Activated B cell treated with CpG ODN at 0.5 μM for 24 hours (primary cell): ENCODE measurements at regions of chr10 and their contacts with region 1.

Region 1: GRCh38 chr10:11684717-11685645 is 57.2 kb upstream of the ECHDC3 start:
- DNase-seq: peak; percentile 69
- ATAC-seq: peak; percentile 76
- H3K4me3 Mint-ChIP-seq: peak overlapping the region; percentile 90
- H3K27ac Mint-ChIP-seq: peak overlapping the region; percentile 100
- H3K4me1 Mint-ChIP-seq: peaks cover 91% of the 10 kb centered on the region
- H3K27me3 Mint-ChIP-seq: no peaks in the 10 kb centered on the region
- CTCF ChIP-seq: no peak

Region 2: GRCh38 chr10:11625019-11625735 is 59.8 kb before region 1 on chr10:
- CTCF ChIA-PET with region 1: no interaction called
- POLR2A ChIA-PET with region 1: interaction called, 10 read pairs
- intact Hi-C with region 1: loop called (anchors 2 kb)
- DNase-seq: peak; percentile 50
- ATAC-seq: peak; percentile 91
- H3K4me3 Mint-ChIP-seq: peak overlapping the region; percentile 70
- H3K27ac Mint-ChIP-seq: peak overlapping the region; percentile 86
- H3K4me1 Mint-ChIP-seq: peaks cover 46% of the 10 kb centered on the region
- H3K27me3 Mint-ChIP-seq: no peaks in the 10 kb centered on the region
- CTCF ChIP-seq: no peak

Region 3: DNA sequence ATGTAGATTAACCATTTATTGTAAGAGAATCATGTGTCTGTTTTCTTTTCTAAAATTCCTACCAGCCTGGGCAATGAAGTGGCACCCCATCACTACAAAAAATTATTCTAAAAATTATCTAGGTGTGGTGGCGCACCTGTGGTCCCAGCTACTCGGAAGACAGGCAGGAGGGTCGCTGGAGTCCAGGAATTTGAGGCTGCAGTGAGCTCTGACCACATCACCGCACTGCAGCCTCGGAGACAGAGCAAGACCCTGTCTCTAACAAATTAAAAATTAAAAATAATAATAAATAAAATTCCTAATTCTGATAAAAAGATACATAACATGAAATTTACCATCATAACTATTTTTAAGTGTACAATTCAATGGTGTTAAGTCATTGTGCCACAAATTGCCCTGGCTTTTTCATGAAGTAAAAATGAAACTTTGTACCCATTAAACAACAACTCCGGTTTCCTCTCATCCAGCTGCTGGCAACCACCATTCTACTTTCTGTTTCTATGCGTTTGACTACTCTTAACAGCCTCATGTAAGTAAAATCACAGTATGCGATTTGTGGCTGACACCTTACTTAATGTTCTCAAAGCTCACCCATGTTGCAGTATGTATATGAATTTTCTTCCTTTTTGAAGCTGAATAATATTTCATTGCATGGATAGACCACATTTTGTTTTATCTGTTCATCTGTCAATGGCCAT is 52.9 kb before region 1 on chr10:
- CTCF ChIA-PET with region 1: no interaction called
- POLR2A ChIA-PET with region 1: interaction called, 10 read pairs
- intact Hi-C with region 1: loop called (anchors 1 kb)
- DNase-seq: no peak
- ATAC-seq: peak; percentile 97
- H3K4me3 Mint-ChIP-seq: peak overlapping the region; percentile 65
- H3K27ac Mint-ChIP-seq: peak overlapping the region; percentile 95
- H3K4me1 Mint-ChIP-seq: peaks cover 52% of the 10 kb centered on the region
- H3K27me3 Mint-ChIP-seq: no peaks in the 10 kb centered on the region
- CTCF ChIP-seq: no peak

Region 4: GRCh38 chr10:11698691-11699549 is 13.9 kb after region 1 on chr10:
- CTCF ChIA-PET with region 1: interaction called, 4 read pairs
- POLR2A ChIA-PET with region 1: interaction called, 43 read pairs
- intact Hi-C with region 1: loop called (anchors 1 kb)
- DNase-seq: no peak
- ATAC-seq: peak; percentile 84
- H3K4me3 Mint-ChIP-seq: peak overlapping the region; percentile 44
- H3K27ac Mint-ChIP-seq: peak overlapping the region; percentile 86
- H3K4me1 Mint-ChIP-seq: peaks cover 66% of the 10 kb centered on the region
- H3K27me3 Mint-ChIP-seq: no peaks in the 10 kb centered on the region
- CTCF ChIP-seq: no peak

Region 5: DNA sequence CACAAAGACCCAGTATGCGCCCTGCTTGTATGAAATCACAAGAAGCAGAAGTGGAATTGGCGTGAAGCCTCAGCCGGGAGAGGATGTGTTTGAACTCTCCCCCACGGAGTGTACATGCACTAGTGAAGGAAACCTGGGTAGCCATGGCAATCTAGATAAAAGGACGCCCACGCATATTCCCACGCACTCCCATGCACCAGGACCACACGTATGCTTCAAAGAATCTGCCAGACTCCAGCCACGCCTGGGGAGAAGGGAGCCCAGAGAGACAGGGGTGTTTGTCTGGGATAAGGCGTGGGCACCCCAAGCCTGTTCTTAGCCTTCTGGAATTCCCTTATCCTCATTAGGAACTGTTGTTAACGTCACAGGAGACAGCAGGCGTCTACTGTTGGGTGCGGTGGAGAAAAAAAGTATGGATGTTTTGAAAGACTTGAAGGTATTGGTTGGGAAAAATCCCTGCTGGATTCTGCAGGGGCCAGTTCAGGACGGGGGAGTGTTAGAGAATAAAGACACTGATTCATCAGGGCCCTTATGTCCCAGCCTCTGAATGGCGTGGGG is 28.3 kb after region 1 on chr10:
- CTCF ChIA-PET with region 1: interaction called, 9 read pairs
- POLR2A ChIA-PET with region 1: interaction called, 15 read pairs
- intact Hi-C with region 1: loop called (anchors 1 kb)
- DNase-seq: no peak
- ATAC-seq: peak; percentile 27
- H3K4me3 Mint-ChIP-seq: no peak overlapping the region
- H3K27ac Mint-ChIP-seq: no peak overlapping the region
- H3K4me1 Mint-ChIP-seq: peaks cover 56% of the 10 kb centered on the region
- H3K27me3 Mint-ChIP-seq: no peaks in the 10 kb centered on the region
- CTCF ChIP-seq: no peak

Region 6: DNA sequence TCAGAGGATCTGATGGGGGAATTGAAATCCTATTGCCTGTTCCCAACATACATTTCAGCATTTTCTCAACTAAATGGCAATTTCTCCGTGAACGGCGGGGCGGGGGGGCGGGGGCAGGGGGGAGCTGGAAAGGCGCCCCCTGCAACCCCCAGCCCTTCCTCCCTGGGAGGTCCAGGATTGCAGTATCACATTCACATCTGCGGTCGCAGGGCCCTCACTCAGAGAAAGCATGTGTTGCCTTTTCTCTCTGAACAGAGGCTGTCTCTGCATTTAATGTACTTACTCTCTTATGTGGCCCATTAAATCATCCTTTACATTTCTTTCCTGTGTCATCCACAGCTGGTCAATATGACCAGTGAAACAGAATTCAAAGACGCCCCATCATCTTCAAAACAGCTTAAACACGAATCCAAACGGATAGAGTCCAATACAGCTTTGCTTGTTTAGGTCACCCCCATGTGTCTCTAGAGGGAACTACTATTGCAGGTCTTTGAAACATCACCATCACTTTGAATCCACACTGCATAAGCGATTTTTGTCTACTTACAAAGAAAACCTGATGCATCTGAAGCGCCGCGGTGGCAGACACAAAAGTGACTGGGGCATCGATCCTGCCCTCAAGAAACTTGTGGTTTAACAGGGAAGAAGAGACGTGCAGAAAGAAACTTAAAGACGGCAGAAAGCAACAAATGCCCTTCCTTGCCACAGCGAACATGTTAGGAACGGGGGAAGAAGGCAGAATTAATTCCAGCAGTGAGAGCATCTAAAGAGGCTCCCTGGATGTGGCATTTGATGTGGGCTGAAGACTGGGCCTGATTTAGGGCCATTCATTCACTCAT is 40.2 kb after region 1 on chr10:
- CTCF ChIA-PET with region 1: interaction called, 21 read pairs
- POLR2A ChIA-PET with region 1: interaction called, 12 read pairs
- intact Hi-C with region 1: loop called (anchors 1 kb)
- DNase-seq: no peak
- ATAC-seq: peak; percentile 95
- H3K4me3 Mint-ChIP-seq: no peak overlapping the region
- H3K27ac Mint-ChIP-seq: peak overlapping the region; percentile 79
- H3K4me1 Mint-ChIP-seq: peaks cover 29% of the 10 kb centered on the region
- H3K27me3 Mint-ChIP-seq: no peaks in the 10 kb centered on the region
- CTCF ChIP-seq: peak; percentile 45

Region 7: GRCh38 chr10:12068449-12069269 is 383.7 kb after region 1 on chr10 and contains the start of gene DHTKD1:
- CTCF ChIA-PET with region 1: no interaction called
- POLR2A ChIA-PET with region 1: no interaction called
- intact Hi-C with region 1: no loop called
- DNase-seq: peak; percentile 99
- ATAC-seq: peak; percentile 96
- H3K4me3 Mint-ChIP-seq: peak within 1 kb of the TSS; percentile 87
- H3K27ac Mint-ChIP-seq: peak within 1 kb of the TSS; percentile 90
- H3K4me1 Mint-ChIP-seq: peaks cover 44% of the 10 kb centered on the region
- H3K27me3 Mint-ChIP-seq: no peaks in the 10 kb centered on the region
- CTCF ChIP-seq: no peak
- total RNA-seq, gene DHTKD1: 58.2 and 60.7 TPM in 2 replicates